PC-9 (cell line): ENCODE measurements at regions of chr16 and their contacts with region 1.

Region 1: DNA sequence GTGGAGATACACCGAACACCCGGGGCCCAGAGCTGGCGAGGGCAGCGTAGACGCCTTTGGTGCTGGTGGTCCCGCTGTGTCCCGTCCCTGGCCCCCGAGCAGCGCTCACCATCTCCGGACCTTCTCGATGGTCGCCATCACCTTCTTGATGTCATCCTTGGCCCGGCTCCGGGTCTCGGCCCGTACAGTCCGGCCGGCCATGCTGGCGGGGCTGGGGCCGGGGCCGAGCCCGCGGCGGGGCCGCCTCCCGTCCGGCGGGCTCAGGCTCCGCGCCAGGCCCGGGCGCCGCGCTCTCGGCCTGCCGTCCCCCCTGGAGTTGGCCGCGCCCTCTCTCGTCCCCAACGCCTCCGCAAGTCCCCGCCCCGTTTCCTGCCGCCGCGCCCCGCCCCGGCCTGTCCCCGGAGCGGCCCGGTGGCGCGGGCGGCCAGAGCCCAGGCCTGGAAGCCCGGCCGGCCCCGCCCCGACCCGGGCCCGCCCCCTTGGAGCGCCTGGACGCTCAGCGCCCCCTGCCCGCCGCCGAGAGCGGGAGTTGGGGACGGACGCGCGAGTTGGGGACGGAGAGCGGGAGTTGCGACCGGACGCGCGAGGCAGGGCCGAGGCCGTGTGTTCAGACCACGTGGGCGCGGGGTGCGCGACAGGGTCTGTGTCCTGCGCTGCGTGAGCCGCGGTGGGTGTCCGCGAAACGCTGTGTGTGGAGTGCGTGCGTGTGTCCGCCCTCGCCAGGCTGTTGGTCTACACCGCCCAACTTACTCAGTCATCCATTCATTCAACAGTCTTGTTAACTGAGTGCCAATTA is at the start of gene BCL7C:
- DNase-seq: peak; percentile 73 to 98
- H3K4me3 ChIP-seq: peak within 1 kb of the TSS; percentile 89
- H3K27ac ChIP-seq: peak within 1 kb of the TSS; percentile 88
- H3K4me1 ChIP-seq: peaks cover 34% of the 10 kb centered on the region
- H3K27me3 ChIP-seq: no peaks in the 10 kb centered on the region
- CTCF ChIP-seq: peak; percentile 47; the same call in 1 of the 2 replicates
- total RNA-seq, gene BCL7C: 59.3 and 66.9 TPM in 2 replicates

Region 2: DNA sequence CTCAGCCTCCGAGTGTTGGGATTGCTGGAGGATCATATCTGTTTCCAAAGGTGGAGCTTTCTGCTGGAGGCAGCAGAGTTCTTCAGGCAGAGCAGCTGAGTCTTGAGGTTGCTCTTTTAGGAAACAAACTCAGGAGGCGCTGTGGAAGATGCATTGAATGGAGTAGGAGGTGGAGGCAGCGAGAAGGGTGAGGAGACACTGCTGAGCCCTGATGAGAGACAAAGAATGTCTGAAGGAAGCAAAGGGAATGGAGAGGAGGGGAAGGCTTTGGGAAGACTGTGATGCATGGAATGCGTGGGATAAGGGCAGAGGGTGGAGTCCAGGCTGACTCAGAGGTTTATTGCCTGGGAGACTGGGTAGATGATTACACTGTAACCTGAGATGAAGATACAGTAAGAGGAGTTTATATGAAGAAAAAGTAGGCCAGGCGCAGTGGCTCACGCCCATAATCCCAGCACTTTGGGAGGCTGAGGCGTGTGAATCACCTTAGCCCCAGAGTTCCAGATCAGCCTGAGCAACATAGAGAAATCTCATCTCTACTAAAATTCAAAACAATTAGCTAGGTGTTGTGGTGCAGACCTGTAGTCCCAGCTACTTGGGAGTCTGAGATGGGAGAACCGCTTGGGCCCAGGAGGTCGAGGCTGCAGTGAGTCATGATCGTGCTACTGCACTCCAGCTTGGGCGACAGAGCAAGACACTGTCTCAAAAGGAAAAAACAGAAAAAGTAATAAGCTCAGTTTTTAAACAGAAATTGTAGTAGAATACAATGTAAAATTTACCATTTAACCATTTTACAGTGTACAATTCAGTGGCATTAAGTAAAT is 949.9 kb before region 1 on chr16:
- CTCF ChIA-PET with region 1: interaction called, 12 read pairs
- POLR2A ChIA-PET with region 1: no interaction called
- intact Hi-C with region 1: no loop called
- DNase-seq: peak; percentile 92 to 99
- H3K4me3 ChIP-seq: peak overlapping the region; percentile 47; the same call in 1 of the 2 replicates
- H3K27ac ChIP-seq: peak overlapping the region; percentile 94
- H3K4me1 ChIP-seq: peaks cover 26% of the 10 kb centered on the region
- H3K27me3 ChIP-seq: no peaks in the 10 kb centered on the region
- CTCF ChIP-seq: peak; percentile 69

Region 3: DNA sequence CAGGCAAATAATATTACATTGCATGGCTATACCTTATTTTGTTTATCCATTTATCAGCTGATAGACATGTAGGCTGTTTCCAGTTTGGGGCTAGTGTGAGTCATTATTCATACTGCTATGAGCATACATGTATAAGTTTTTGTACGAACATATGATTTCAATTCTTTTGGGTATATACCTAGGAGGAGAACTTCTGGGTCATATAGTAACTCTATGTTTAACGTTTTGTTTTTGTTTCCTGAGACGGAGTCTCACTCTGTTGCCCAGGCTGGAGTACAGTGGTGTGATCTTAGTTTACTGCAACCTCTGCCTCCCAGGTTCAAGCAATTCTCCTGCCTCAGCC is 423.8 kb before region 1 on chr16:
- CTCF ChIA-PET with region 1: no interaction called
- POLR2A ChIA-PET with region 1: no interaction called
- intact Hi-C with region 1: no loop called
- DNase-seq: no peak
- H3K4me3 ChIP-seq: no peak overlapping the region
- H3K27ac ChIP-seq: no peak overlapping the region
- H3K4me1 ChIP-seq: no peaks in the 10 kb centered on the region; the same call in 1 of the 2 replicates
- H3K27me3 ChIP-seq: peaks cover 12% of the 10 kb centered on the region; the same call in 1 of the 2 replicates
- CTCF ChIP-seq: no peak

Region 4: GRCh38 chr16:30650369-30651123 is 243.4 kb before region 1 on chr16 and contains the start of gene PRR14:
- CTCF ChIA-PET with region 1: no interaction called
- POLR2A ChIA-PET with region 1: no interaction called
- intact Hi-C with region 1: loop called (anchors 5 kb)
- DNase-seq: peak; percentile 97 to 100
- H3K4me3 ChIP-seq: peak within 1 kb of the TSS; percentile 72
- H3K27ac ChIP-seq: peak within 1 kb of the TSS; percentile 56
- H3K4me1 ChIP-seq: peaks cover 6% of the 10 kb centered on the region; the same call in 1 of the 2 replicates
- H3K27me3 ChIP-seq: no peaks in the 10 kb centered on the region
- CTCF ChIP-seq: no peak
- total RNA-seq, gene PRR14: 67.3 and 85.3 TPM in 2 replicates

Region 5: GRCh38 chr16:30740364-30741251 is 153.3 kb before region 1 on chr16:
- CTCF ChIA-PET with region 1: no interaction called
- POLR2A ChIA-PET with region 1: no interaction called
- intact Hi-C with region 1: loop called (anchors 1 kb)
- DNase-seq: peak; percentile 98
- H3K4me3 ChIP-seq: peak overlapping the region; percentile 68
- H3K27ac ChIP-seq: peak overlapping the region; percentile 96
- H3K4me1 ChIP-seq: peaks cover 33% of the 10 kb centered on the region
- H3K27me3 ChIP-seq: no peaks in the 10 kb centered on the region
- CTCF ChIP-seq: 0 out of 2 replicates have a peak, but pooled peaks have one; percentile 17

Region 6: DNA sequence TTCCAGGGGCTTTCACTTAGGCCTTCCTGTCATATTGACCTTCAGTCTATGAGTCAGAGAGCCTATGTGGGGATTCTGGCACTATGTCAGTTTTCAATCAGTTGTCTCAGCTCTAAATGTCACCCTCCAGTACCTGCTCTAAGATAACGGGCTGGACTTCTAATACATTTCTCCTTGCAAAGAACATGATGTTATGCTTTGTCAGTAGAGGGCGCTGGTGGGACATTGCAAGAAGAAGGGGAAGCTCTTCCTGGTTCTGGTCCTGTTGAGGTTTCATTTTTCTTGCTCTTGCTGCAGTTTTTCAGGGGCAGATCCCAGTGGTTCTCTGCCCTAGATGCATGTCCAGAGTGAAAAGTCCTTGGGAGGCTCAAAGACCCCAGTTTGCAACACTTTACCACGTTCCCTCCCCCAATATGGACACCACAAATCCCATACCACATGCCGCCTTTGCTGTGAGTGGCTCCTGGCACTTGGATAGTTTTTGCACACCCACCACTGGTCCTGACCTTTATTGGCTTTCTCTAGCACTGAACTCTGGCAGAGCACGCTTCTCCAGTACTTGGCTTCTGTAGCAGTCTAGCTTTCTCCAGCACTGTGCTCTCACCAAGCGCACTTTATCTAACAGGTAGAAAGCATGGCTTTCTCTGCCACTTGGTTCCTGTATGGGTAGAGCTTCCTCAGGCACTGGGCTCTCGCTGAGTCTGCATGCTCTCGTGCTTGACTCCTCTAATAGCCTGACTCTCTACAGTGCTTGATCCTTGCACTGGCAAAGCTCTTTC is 49.1 kb before region 1 on chr16:
- CTCF ChIA-PET with region 1: interaction called, 7 read pairs
- POLR2A ChIA-PET with region 1: no interaction called
- intact Hi-C with region 1: loop called (anchors 2 kb)
- DNase-seq: peak; percentile 72 to 81
- H3K4me3 ChIP-seq: no peak overlapping the region
- H3K27ac ChIP-seq: no peak overlapping the region
- H3K4me1 ChIP-seq: 0 out of 2 replicates have a peak, but pooled peaks cover 4% of the 10 kb centered on the region
- H3K27me3 ChIP-seq: no peaks in the 10 kb centered on the region
- CTCF ChIP-seq: peak; percentile 97

Region 7: DNA sequence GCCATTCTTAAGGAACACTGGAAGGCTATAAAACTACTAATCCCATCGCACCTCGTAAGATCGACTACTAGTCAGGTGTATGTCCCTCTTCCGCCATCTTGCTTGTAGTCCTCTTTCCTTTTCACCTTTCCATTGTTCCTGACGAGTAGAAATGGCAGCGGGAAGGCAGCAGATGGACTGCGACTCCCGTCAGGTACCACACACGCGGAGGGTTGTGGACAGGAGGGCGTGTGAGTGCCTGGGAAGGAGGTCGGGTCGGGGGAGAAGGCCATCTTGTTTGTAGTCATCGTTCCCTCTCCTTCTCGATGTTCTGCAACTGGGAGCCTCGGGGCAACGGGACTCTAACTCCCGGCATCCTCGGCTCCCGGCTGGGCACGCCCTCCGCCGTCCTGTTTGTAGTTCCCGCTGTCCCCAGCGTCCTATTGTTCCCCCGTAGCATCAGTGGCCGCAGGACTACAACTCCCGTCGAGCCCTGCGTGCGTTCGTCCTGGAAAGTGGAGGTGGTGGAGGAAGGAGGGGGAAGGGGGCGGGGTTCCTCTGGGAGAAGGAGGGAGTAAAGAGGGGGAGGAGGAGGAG is 29.1 kb after region 1 on chr16:
- CTCF ChIA-PET with region 1: interaction called, 8 read pairs
- POLR2A ChIA-PET with region 1: interaction called, 4 read pairs
- intact Hi-C with region 1: loop called (anchors 1 kb)
- DNase-seq: peak; percentile 98 to 100
- H3K4me3 ChIP-seq: peak overlapping the region; percentile 83
- H3K27ac ChIP-seq: peak overlapping the region; percentile 90
- H3K4me1 ChIP-seq: no peaks in the 10 kb centered on the region; the same call in 1 of the 2 replicates
- H3K27me3 ChIP-seq: no peaks in the 10 kb centered on the region
- CTCF ChIP-seq: no peak

Region 8: GRCh38 chr16:31861455-31861854 is 967.5 kb after region 1 on chr16:
- CTCF ChIA-PET with region 1: no interaction called
- POLR2A ChIA-PET with region 1: interaction called, 12 read pairs
- intact Hi-C with region 1: no loop called
- DNase-seq: no peak
- H3K4me3 ChIP-seq: no peak overlapping the region
- H3K27ac ChIP-seq: no peak overlapping the region
- H3K4me1 ChIP-seq: no peaks in the 10 kb centered on the region
- H3K27me3 ChIP-seq: peaks cover 44% of the 10 kb centered on the region
- CTCF ChIP-seq: no peak